Activated CD4-positive, alpha-beta memory T cell treated with anti-CD3 and anti-CD28 coated beads for 36 hours (primary cell): ENCODE measurements at regions of chr11 and their contacts with region 1.

Region 1: GRCh38 chr11:8263769-8264410 is at the start of gene LMO1:
- DNase-seq: peak; percentile 83
- H3K4me3 Mint-ChIP-seq: peak within 1 kb of the TSS; percentile 41
- H3K27ac Mint-ChIP-seq: no peak within 1 kb of the TSS
- H3K4me1 Mint-ChIP-seq: peaks cover 11% of the 10 kb centered on the region
- H3K27me3 Mint-ChIP-seq: peaks cover 63% of the 10 kb centered on the region
- total RNA-seq, gene LMO1: not detected

Region 2: DNA sequence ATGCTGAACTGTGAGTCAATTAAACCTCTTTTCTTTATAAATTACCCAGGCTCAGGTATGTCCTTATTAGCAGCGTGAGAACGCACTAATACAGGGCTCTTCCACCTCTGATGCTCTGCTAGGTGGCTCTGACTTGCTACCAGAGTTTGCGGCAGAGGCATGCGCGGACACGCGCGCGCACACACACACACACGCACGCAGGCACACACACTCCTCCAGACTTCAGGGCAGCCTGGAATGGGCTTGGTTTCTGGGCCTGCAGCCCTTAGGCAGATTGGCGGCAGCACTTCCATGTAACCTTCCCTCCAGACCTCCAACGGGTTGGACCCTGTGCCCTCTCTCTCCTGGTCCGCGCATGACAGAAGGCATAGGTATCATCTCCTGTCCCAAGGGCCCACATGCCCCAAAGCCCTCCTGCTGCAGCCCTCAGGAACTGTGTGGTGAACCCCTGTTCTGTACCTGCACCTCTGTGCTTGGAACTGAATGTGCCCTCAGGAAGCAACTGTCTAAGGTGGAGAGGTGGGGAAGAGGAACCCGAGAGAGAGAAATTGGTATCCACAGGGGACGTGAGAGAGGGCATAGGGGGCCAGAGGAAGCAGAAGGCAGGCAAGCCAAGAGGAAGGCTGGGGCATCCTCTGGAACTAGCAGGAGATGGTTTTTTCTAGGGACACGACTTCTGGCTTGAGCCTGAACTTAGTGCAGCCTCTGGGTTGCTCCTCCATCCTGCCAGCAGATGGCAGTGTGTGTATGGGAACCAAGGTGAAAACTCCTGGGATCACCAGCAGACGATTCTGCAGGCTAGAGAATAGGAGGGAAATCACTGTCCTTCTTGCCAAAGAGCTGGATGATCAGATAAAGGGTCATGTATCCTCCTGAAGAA is 71.6 kb before region 1 on chr11:
- CTCF ChIA-PET with region 1: interaction called, 9 read pairs
- POLR2A ChIA-PET with region 1: no interaction called
- intact Hi-C with region 1: loop called (anchors 2 kb)
- DNase-seq: peak; percentile 56
- H3K4me3 Mint-ChIP-seq: no peak overlapping the region
- H3K27ac Mint-ChIP-seq: no peak overlapping the region
- H3K4me1 Mint-ChIP-seq: no peaks in the 10 kb centered on the region
- H3K27me3 Mint-ChIP-seq: peaks cover 19% of the 10 kb centered on the region

Region 3: DNA sequence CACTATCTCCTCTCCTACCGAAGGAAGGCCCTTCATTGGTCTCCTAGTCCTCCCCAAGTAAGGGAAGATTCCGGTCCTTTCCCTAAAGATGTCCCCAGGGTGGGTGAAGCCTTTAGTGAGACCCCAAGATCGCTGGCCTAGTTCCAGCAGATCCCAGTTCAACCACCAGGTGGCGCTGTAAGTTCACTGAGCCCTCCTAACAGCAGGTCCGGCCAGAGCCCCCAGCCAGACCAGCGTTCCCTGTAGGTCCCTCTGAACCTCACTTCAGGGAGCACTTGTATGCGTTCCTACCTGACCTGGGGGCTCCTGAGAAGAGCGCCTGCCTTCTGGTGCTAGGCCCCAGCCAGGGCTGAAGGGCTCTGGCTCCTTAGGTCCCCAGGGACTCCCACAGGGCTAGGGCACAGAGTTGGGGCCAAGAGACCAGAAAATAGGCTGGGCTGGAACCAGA is 38.3 kb before region 1 on chr11:
- CTCF ChIA-PET with region 1: interaction called, 18 read pairs
- POLR2A ChIA-PET with region 1: no interaction called
- intact Hi-C with region 1: loop called (anchors 1 kb)
- DNase-seq: peak; percentile 76
- H3K4me3 Mint-ChIP-seq: no peak overlapping the region
- H3K27ac Mint-ChIP-seq: no peak overlapping the region
- H3K4me1 Mint-ChIP-seq: no peaks in the 10 kb centered on the region
- H3K27me3 Mint-ChIP-seq: no peaks in the 10 kb centered on the region

Region 4: GRCh38 chr11:8252388-8252787 is 11.5 kb before region 1 on chr11:
- CTCF ChIA-PET with region 1: interaction called, 47 read pairs
- POLR2A ChIA-PET with region 1: no interaction called
- intact Hi-C with region 1: loop called (anchors 2 kb)
- DNase-seq: no peak
- H3K4me3 Mint-ChIP-seq: no peak overlapping the region
- H3K27ac Mint-ChIP-seq: no peak overlapping the region
- H3K4me1 Mint-ChIP-seq: no peaks in the 10 kb centered on the region
- H3K27me3 Mint-ChIP-seq: no peaks in the 10 kb centered on the region

Region 5: GRCh38 chr11:8566613-8567210 is 302.8 kb after region 1 on chr11:
- CTCF ChIA-PET with region 1: interaction called, 13 read pairs
- POLR2A ChIA-PET with region 1: no interaction called
- intact Hi-C with region 1: no loop called
- DNase-seq: no peak
- H3K4me3 Mint-ChIP-seq: no peak overlapping the region
- H3K27ac Mint-ChIP-seq: no peak overlapping the region
- H3K4me1 Mint-ChIP-seq: no peaks in the 10 kb centered on the region
- H3K27me3 Mint-ChIP-seq: peaks cover 20% of the 10 kb centered on the region